CD8-positive, alpha-beta T cell (primary cell): ENCODE measurements at regions of chr20 and their contacts with region 1.

Region 1: DNA sequence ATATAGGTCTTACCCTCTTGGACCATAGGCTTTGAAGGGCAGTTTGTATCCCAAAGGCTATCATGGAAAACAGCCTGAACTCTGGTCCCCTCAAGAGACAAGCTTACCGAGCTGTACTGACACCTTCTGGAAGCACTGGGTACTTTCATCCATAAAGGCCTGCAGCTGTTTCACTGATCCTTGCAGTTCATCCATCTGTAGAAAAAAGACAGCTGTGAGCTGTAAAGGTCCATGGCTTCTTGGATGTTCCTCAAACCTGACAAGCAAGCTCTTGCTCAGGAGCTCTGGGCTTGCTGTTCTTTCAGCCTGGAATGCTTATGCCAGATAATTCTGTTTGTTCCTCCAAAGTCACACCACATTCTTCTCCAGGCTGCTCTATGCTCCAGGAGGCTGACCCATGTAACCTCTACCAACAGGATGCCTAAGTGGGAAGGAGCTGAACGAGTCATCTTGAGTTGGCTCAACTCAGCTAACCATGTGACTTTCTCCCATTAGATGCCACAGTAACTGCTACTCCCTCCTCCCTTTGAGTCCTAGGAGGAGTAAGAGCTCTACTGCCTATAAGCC is 8.8 kb upstream of the NDRG3 start:
- DNase-seq: peak in 7 of 9 experiments; percentile 10 to 74 (median 41)
- ATAC-seq: peak; percentile 94
- H3K4me3 ChIP-seq: no peak overlapping the region
- H3K4me3 Mint-ChIP-seq: no peak overlapping the region
- H3K27ac ChIP-seq: no peak overlapping the region
- H3K27ac Mint-ChIP-seq: no peak overlapping the region
- H3K4me1 ChIP-seq: no peaks in the 10 kb centered on the region
- H3K4me1 Mint-ChIP-seq: no peaks in the 10 kb centered on the region
- H3K27me3 ChIP-seq: no peaks in the 10 kb centered on the region
- H3K27me3 Mint-ChIP-seq: no peaks in the 10 kb centered on the region
- CTCF ChIP-seq: peak; percentile 61

Region 2: DNA sequence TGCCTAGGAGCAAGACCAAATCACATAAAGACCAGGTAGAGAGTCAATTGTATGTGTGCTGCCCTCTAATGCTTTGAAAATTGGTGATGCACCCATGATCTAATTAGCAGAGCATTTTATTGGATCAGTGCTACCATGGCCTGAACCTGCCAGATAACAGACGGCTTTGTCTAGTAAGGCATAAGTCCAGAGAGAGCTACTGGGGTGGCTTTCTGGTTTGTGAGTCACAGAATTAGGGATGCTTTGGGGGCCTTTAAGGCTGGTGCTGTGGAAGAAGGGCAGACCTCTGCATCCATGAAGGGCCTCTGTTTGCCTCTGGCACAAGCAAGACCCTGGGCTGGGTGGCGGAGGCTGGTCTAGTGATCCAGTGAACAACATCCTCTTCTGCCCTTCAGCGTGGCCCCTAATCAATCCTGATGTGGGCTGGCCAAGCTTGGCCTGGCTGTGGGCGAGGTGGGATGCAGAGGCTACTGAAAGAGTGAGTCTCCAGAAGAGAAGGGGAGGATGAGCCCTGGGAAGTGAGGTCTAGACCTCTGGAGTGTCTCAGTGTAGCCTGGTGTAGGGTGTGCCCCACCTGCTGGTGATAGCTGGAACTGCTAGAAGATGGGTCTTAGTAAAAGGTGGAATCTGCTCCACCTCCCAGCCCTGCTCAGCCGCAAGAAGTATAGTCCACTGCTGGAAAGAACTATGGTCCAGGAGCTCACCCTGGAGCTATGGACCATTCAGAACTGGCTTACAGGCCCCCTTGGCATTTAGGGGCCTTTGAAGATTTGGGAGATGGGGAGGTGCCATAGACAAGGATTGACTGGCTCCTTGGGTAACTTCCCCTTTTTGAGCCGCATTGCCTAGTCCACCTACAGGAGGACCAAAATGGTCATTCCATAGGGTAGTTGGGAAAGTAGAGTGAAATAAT is 555.1 kb before region 1 on chr20:
- CTCF ChIA-PET with region 1: interaction called, 4 read pairs
- POLR2A ChIA-PET with region 1: no interaction called
- intact Hi-C with region 1: loop called (anchors 2 kb)
- DNase-seq: peak; percentile 53 to 79 (median 74)
- ATAC-seq: peak; percentile 82
- H3K4me3 ChIP-seq: no peak overlapping the region
- H3K4me3 Mint-ChIP-seq: no peak overlapping the region
- H3K27ac ChIP-seq: no peak overlapping the region
- H3K27ac Mint-ChIP-seq: no peak overlapping the region
- H3K4me1 ChIP-seq: no peaks in the 10 kb centered on the region
- H3K4me1 Mint-ChIP-seq: peaks cover 8% of the 10 kb centered on the region
- H3K27me3 ChIP-seq: no peaks in the 10 kb centered on the region
- H3K27me3 Mint-ChIP-seq: peaks cover 7% of the 10 kb centered on the region
- CTCF ChIP-seq: peak; percentile 82

Region 3: DNA sequence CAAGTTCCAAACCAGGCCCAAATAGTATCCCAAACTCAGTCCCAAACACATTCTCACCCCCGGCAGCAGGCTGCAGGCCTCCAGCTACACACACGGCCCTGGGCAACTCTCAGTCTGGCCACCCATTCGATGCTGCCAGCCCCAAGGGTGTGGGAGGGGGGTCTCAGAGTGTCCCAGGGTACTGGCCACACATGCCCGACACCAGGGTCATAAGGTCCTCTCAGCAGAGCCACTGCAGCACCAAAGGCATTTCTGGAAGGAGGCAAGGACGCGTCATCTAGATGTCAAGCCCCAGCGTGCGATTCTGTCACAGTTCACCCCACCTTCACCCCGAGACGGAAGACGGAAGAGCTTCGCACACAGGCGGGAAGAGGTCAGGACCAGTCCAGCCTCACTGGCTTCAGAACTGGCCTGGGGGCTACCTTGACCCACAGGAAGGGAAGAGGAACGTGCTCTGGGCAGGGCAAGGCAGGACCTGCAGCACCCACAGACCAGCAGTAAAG is 203.9 kb before region 1 on chr20:
- CTCF ChIA-PET with region 1: no interaction called
- POLR2A ChIA-PET with region 1: no interaction called
- intact Hi-C with region 1: loop called (anchors 1 to 5 kb)
- DNase-seq: no peak
- ATAC-seq: no peak
- H3K4me3 ChIP-seq: no peak overlapping the region
- H3K4me3 Mint-ChIP-seq: no peak overlapping the region
- H3K27ac ChIP-seq: no peak overlapping the region
- H3K27ac Mint-ChIP-seq: no peak overlapping the region
- H3K4me1 ChIP-seq: no peaks in the 10 kb centered on the region
- H3K4me1 Mint-ChIP-seq: peaks cover 2% of the 10 kb centered on the region
- H3K27me3 ChIP-seq: no peaks in the 10 kb centered on the region
- H3K27me3 Mint-ChIP-seq: no peaks in the 10 kb centered on the region
- CTCF ChIP-seq: no peak

Region 4: DNA sequence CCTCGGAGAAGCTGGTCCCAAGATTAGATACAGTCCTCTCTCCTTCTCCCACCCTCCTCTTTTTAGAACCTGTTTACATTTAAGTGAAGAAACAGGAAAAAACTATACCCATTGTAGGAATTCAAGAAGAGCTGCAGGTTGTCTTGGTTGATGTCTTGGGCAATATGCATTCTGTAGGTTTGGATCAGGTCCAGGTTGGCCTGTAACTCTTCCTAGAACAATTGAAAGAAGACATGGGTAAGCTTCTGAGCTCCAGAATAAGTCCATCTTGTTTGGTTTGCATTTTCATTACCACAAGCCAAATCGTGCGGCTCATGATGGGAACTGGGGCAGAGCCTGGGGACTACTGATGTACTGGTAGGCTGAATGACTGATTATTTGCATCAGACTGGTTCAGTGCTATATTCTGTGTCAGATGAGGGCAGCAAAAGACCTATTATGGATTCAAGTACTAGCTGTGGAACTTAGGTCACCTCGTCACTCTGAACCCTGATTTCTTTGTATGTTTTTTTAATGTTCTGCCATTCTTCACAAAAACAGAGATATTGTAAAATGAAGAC is 88.5 kb before region 1 on chr20:
- CTCF ChIA-PET with region 1: interaction called, 5 read pairs
- POLR2A ChIA-PET with region 1: no interaction called
- intact Hi-C with region 1: loop called (anchors 1 to 5 kb)
- DNase-seq: peak in 2 of 9 experiments; percentile 32 to 50
- ATAC-seq: peak; percentile 55
- H3K4me3 ChIP-seq: no peak overlapping the region
- H3K4me3 Mint-ChIP-seq: no peak overlapping the region
- H3K27ac ChIP-seq: no peak overlapping the region
- H3K27ac Mint-ChIP-seq: no peak overlapping the region
- H3K4me1 ChIP-seq: no peaks in the 10 kb centered on the region
- H3K4me1 Mint-ChIP-seq: peaks cover 1% of the 10 kb centered on the region
- H3K27me3 ChIP-seq: no peaks in the 10 kb centered on the region
- H3K27me3 Mint-ChIP-seq: no peaks in the 10 kb centered on the region
- CTCF ChIP-seq: no peak

Region 5: GRCh38 chr20:36736451-36737182 is 18.1 kb before region 1 on chr20:
- CTCF ChIA-PET with region 1: interaction called, 14 read pairs
- POLR2A ChIA-PET with region 1: no interaction called
- intact Hi-C with region 1: no loop called
- DNase-seq: no peak
- ATAC-seq: no peak
- H3K4me3 ChIP-seq: no peak overlapping the region
- H3K4me3 Mint-ChIP-seq: no peak overlapping the region
- H3K27ac ChIP-seq: no peak overlapping the region
- H3K27ac Mint-ChIP-seq: no peak overlapping the region
- H3K4me1 ChIP-seq: peaks cover 17% of the 10 kb centered on the region
- H3K4me1 Mint-ChIP-seq: peaks cover 33% of the 10 kb centered on the region
- H3K27me3 ChIP-seq: no peaks in the 10 kb centered on the region
- H3K27me3 Mint-ChIP-seq: no peaks in the 10 kb centered on the region
- CTCF ChIP-seq: no peak